Mammary epithelial cell (primary cell): ENCODE measurements at regions of chr1 and their contacts with region 1.

Region 1: DNA sequence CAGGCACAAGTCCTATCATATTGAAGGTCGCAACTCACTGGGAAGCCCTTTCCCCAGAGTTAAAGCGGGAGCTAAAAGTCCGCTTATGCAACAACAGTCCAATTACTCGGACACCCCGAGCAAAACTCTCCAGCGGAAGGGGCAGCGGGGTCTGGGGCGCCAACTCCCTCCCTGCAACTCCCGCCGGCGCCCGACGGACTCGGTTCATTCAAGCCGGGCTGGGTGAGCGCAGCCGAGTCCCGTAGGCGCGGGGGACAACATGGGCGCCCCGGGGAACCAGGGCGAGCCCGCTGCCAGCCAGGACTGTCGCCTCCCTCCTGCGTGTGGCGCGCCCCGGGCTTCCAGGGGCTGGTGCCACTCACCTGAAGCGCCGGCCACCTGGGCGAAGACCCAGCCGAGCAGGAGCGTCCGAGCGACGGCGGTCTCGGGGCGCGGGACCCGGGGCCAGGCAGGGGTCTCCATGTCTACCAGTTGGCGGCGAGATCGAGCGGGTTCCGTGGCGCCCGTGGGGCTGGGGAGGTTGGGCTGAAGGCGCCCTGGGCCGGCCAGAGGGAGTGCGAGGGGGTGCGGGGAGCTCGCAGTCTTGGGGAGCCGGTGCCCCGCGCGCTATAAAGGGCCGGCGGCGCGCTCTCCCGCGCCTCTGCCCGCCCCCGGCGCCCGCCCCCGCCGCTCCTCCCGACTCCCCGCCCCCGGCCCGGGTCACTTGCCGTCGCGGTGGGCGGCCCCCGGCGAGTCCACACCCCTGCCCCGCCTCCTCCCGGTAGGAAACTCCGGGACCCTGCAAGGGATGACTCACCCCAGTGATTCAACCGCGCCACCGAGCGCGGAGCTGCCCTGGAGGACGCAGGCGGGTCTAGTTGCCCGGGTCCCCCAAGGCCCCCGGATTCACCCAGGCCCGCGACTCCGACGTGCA is at the start of gene F3:
- DNase-seq: peak; percentile 95
- H3K4me3 ChIP-seq: peak within 1 kb of the TSS; percentile 83 to 89 (median 87)
- H3K27ac ChIP-seq: peak within 1 kb of the TSS; percentile 89
- H3K4me1 ChIP-seq: peaks cover 31% of the 10 kb centered on the region
- H3K27me3 ChIP-seq: no peaks in the 10 kb centered on the region
- CTCF ChIP-seq: no peak
- total RNA-seq, gene F3: 994 to 1,649 TPM

Region 2: DNA sequence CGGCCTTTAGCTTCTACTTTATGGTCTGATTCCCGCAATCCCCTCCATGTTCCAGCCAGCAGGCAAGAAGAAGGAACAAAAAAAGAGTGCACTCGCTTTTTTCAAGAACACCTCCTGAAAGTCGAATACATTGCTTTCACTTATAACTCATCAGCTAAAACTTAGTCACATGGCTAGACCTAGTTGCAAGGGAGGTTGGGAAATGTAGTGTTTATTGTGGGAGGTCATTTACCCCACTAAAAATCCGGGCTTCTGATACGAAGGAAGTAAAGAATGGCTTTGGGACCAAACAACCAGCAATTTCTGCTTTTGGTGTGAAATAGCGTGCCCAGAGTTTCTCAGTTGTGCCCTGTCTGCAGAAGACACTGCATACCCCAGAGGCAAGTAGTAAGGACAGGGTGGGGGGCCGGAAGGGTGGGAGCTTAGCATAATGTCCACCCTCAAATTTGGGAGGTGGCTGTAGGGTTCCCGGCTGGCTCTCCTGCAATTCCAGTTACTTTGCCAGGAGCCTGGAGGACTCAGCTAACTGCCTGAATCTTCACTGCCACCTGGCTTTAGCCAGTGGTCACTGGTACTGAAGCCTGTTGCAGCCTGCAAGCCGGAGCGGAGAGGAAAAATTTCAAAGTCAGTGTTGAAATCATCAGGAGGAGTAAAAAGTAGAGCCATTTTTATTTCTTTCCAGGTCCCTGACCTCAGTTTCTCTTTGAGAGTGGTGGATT is 57.8 kb after region 1 on chr1:
- CTCF ChIA-PET with region 1: no interaction called
- dilution Hi-C with region 1: no loop called
- in situ Hi-C with region 1: loop called in 1 of 2 experiments (anchors 5 kb)
- intact Hi-C with region 1: loop called (anchors 1 kb)
- DNase-seq: peak; percentile 57
- H3K4me3 ChIP-seq: no peak overlapping the region
- H3K27ac ChIP-seq: no peak overlapping the region
- H3K4me1 ChIP-seq: peaks cover 30% of the 10 kb centered on the region
- H3K27me3 ChIP-seq: no peaks in the 10 kb centered on the region
- CTCF ChIP-seq: peak; percentile 62 to 85

Region 3: GRCh38 chr1:94641990-94642389 is 100.6 kb after region 1 on chr1:
- CTCF ChIA-PET with region 1: no interaction called
- dilution Hi-C with region 1: loop called (anchors 5 kb)
- in situ Hi-C with region 1: no loop called
- intact Hi-C with region 1: loop called (anchors 1 kb)
- DNase-seq: peak; percentile 87
- H3K4me3 ChIP-seq: no peak overlapping the region
- H3K27ac ChIP-seq: peak overlapping the region; percentile 78
- H3K4me1 ChIP-seq: peaks cover 47% of the 10 kb centered on the region
- H3K27me3 ChIP-seq: no peaks in the 10 kb centered on the region
- CTCF ChIP-seq: no peak

Region 4: DNA sequence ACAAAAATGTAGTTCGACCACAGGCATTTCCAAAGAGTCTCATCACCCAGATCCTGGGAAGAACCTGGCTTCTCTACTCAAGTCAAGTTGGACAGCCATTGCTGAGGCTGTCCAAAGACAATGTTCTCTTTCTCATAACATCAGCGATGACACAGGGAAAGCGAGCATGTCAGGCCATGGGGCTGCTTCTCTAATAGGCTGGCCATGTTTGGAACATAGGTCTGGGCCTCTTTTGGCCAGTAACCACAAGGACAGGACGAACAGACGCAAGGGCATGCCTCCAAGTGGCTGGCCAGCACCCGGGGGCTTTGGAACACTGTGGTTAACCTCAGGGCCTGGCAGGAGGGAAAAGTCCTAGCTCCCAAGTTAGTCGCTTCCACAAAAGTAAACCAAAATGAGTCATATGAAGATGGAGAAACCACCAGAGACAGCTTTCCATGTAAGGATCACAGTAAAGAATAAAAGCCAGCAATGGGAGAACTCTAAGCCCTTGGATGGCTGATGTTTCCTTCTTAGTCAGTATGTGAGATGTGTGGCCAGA is 198.2 kb after region 1 on chr1:
- CTCF ChIA-PET with region 1: no interaction called
- dilution Hi-C with region 1: loop called (anchors 5 kb)
- in situ Hi-C with region 1: no loop called
- intact Hi-C with region 1: loop called (anchors 1 kb)
- DNase-seq: peak; percentile 95
- H3K4me3 ChIP-seq: no peak overlapping the region
- H3K27ac ChIP-seq: peak overlapping the region; percentile 65
- H3K4me1 ChIP-seq: peaks cover 67% of the 10 kb centered on the region
- H3K27me3 ChIP-seq: no peaks in the 10 kb centered on the region
- CTCF ChIP-seq: no peak